Endothelial cell of umbilical vein (primary cell): ENCODE measurements at regions of chrX and their contacts with region 1.

Region 1: GRCh38 chrX:68163441-68163840 is 269.9 kb downstream of the OPHN1 start:
- DNase-seq: peak; percentile 87
- H3K4me3 ChIP-seq: no peak overlapping the region
- H3K27ac ChIP-seq: peak overlapping the region; percentile 78
- H3K4me1 ChIP-seq: peaks cover 21% of the 10 kb centered on the region
- H3K27me3 ChIP-seq: no peaks in the 10 kb centered on the region
- CTCF ChIP-seq: no peak
- POLR2A ChIP-seq: no peak

Region 2: DNA sequence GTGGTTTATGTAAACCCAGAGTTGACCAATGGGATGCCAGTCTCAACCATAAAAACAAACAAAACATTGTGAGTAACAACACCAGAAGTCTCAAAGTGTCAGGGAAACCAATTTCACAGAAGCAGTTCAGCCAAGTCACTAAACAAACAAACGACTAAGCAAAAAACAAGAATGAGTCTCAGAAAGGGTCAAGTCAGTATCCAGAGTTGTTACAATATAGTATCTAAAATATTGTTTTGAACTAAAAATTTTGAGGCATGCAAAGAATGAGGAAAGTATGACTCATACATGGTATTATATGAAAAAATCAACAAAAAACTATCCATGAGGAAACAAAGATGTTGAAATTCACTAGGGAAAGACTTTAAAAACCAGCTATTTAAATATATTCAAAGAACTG is 549.0 kb before region 1 on chrX:
- CTCF ChIA-PET with region 1: no interaction called
- POLR2A ChIA-PET with region 1: no interaction called
- dilution Hi-C with region 1: no loop called
- intact Hi-C with region 1: loop called (anchors 5 kb)
- DNase-seq: no peak
- H3K4me3 ChIP-seq: no peak overlapping the region
- H3K27ac ChIP-seq: peak overlapping the region; percentile 94
- H3K4me1 ChIP-seq: peaks cover 45% of the 10 kb centered on the region
- H3K27me3 ChIP-seq: no peaks in the 10 kb centered on the region
- CTCF ChIP-seq: no peak
- POLR2A ChIP-seq: no peak